ENCODE measurements at regions of chr17 and their contacts with region 1.

Region 1: GRCh38 chr17:72592242-72592966 is 471.6 kb downstream of the SOX9 start:
- DNase-seq: peak; percentile 99
- H3K4me3 ChIP-seq: peak overlapping the region; percentile 67 to 85
- H3K27ac ChIP-seq: peak overlapping the region; percentile 66; a peak in 2 of 4 replicates
- H3K4me1 ChIP-seq: peaks cover 4 to 14% of the 10 kb centered on the region in 2 experiments; a peak in 1 of 4 replicates
- H3K27me3 ChIP-seq: no peaks in the 10 kb centered on the region
- CTCF ChIP-seq: no peak
- EP300 ChIP-seq: no peak
- RAD21 ChIP-seq: 0 out of 2 replicates have a peak, but pooled peaks have one; percentile 14

Region 2: GRCh38 chr17:72580321-72581127 is 11.9 kb before region 1 on chr17:
- CTCF ChIA-PET with region 1: interaction called, 13 read pairs
- POLR2A ChIA-PET with region 1: no interaction called
- DNase-seq: no peak
- H3K4me3 ChIP-seq: no peak overlapping the region
- H3K27ac ChIP-seq: no peak overlapping the region
- H3K4me1 ChIP-seq: peaks cover 0 to 12% of the 10 kb centered on the region in 2 experiments; a peak in 1 of 4 replicates
- H3K27me3 ChIP-seq: no peaks in the 10 kb centered on the region
- CTCF ChIP-seq: no peak
- EP300 ChIP-seq: no peak
- RAD21 ChIP-seq: no peak

Measured in SK-N-SH (cell line).